IMR-90 (cell line): ENCODE measurements at regions of chr4 and their contacts with region 1.

Region 1: DNA sequence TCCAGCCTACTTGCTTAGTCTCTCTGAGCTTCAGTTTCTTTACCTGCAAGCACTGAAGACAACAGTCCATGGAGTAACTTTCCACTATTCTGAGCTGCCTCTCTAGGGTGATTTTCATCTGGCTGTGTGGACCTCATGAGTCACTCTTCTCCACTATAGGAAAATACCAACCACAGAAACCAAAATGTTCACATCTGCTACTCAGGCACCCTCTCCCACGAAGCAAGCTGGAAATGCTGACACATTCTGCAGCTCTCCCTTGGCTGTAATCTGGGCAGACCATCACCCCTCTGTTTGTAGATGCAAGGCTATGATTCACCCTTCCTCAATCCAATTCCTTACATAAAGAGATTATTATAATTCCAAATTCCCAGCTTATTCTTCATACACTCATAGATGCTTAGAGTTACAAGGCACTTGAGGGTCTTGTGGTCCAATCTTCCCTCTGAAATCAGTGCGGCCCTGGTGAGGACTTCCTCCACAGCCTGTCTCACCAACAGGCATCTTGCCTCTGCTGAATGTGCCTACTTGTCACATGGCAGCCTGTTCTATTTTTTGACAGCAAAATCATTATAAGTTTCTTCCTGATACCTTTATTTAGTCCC is 97.0 kb upstream of the LNX1 start:
- DNase-seq: peak; percentile 100
- ATAC-seq: peak; percentile 95
- H3K4me3 ChIP-seq: no peak overlapping the region
- H3K27ac ChIP-seq: peak overlapping the region; percentile 89
- H3K4me1 ChIP-seq: peaks cover 12% of the 10 kb centered on the region
- H3K27me3 ChIP-seq: no peaks in the 10 kb centered on the region
- CTCF ChIP-seq: no peak
- POLR2A ChIP-seq: no peak
- RAD21 ChIP-seq: peak; percentile 22

Region 2: GRCh38 chr4:53476232-53477037 is 211.9 kb before region 1 on chr4:
- CTCF ChIA-PET with region 1: no interaction called
- POLR2A ChIA-PET with region 1: no interaction called
- dilution Hi-C with region 1: no loop called
- in situ Hi-C with region 1: no loop called
- intact Hi-C with region 1: loop called (anchors 5 kb)
- DNase-seq: peak; percentile 98
- ATAC-seq: peak; percentile 87
- H3K4me3 ChIP-seq: no peak overlapping the region
- H3K27ac ChIP-seq: peak overlapping the region; percentile 93
- H3K4me1 ChIP-seq: peaks cover 20% of the 10 kb centered on the region
- H3K27me3 ChIP-seq: no peaks in the 10 kb centered on the region
- CTCF ChIP-seq: no peak
- POLR2A ChIP-seq: no peak
- RAD21 ChIP-seq: no peak

Region 3: DNA sequence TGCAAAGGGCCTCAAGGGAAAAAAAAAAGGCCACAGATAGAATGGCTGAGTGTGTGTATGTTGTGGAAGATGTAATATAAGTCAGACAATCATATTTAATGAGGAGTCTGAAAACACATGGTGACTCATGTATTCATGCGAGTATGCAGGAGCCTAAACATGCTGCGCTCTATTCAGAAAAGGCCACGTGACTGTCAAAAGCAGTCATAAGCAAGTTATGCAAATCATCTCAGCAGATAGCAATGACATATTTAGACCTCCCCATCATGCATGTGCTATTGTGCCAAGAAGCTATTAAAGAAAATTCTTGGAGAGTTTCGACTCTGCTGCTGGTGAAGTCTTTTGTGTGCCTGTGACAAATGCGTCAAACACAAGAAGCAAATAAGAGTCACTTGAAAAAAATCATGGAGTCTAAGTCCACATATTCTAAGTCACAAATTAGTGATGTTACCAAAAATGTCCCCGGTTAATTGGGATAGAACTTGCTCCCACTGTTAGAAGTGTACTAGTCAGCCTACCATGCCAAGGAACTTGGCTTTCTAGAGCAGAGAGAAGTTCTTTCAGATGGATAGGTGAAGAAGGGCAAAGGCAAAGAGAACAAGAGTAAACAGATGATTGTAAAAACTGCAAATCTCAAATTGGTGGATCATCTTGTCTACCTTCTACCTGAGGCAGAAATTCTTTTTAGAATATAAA is 102.0 kb before region 1 on chr4:
- CTCF ChIA-PET with region 1: no interaction called
- POLR2A ChIA-PET with region 1: no interaction called
- dilution Hi-C with region 1: no loop called
- in situ Hi-C with region 1: no loop called
- intact Hi-C with region 1: loop called (anchors 5 kb)
- DNase-seq: peak; percentile 99
- ATAC-seq: peak; percentile 87
- H3K4me3 ChIP-seq: no peak overlapping the region
- H3K27ac ChIP-seq: peak overlapping the region; percentile 50; the same call in 1 of the 2 replicates
- H3K4me1 ChIP-seq: peaks cover 16% of the 10 kb centered on the region
- H3K27me3 ChIP-seq: no peaks in the 10 kb centered on the region
- CTCF ChIP-seq: no peak
- POLR2A ChIP-seq: no peak
- RAD21 ChIP-seq: 0 out of 2 replicates have a peak, but pooled peaks have one; percentile 6

Region 4: GRCh38 chr4:54209617-54210016 is 521.3 kb after region 1 on chr4:
- CTCF ChIA-PET with region 1: no interaction called
- POLR2A ChIA-PET with region 1: no interaction called
- dilution Hi-C with region 1: no loop called
- in situ Hi-C with region 1: no loop called
- intact Hi-C with region 1: no loop called
- DNase-seq: no peak
- ATAC-seq: no peak
- H3K4me3 ChIP-seq: no peak overlapping the region
- H3K27ac ChIP-seq: no peak overlapping the region
- H3K4me1 ChIP-seq: no peaks in the 10 kb centered on the region
- H3K27me3 ChIP-seq: no peaks in the 10 kb centered on the region
- CTCF ChIP-seq: no peak
- POLR2A ChIP-seq: no peak
- RAD21 ChIP-seq: no peak